ENCODE measurements at regions of chr19 and their contacts with region 1.

Region 1: DNA sequence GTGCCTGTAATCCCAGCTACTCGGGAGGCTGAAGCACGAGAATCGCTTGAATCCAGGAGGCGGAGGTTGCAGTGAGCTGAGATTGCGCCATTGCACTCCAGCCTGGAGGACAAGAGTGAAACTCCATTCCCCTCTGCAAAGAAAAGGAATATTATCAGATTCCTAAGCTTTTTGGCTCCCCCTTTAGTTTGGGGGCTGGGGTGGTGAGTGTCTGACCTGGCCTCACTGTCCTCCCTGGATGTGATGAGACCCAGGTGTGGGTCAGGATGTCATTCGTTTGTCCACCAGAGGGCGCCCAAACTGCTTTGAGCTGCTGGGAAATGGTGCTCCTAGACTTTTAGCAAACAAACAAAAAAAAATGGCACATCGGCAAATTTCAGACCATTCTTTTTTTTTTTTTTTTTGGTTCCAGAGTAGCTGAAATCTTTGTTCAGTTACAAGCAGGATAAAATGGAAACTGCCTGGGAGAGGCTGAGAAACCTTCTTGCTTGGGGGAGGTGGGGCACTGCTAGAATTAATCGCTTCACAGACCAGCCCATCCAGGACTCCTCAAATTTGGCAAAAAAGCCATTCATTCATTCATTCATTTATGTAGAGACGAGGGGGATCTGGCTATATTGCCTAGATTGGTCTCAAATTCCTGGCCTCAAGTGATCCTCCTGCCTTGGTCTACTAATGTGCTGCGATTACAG is 29.4 kb downstream of the SPC24 start:
- DNase-seq: peak; percentile 33 to 73 (median 62)
- ATAC-seq: peak; percentile 77
- H3K4me3 ChIP-seq: no peak overlapping the region
- H3K4me3 Mint-ChIP-seq: no peak overlapping the region
- H3K27ac ChIP-seq: no peak overlapping the region
- H3K27ac Mint-ChIP-seq: peak overlapping the region in 3 of 9 donors; percentile 23 to 72 (median 48)
- H3K4me1 ChIP-seq: no peaks in the 10 kb centered on the region
- H3K4me1 Mint-ChIP-seq: peaks cover 0 to 9% (median 5%) of the 10 kb centered on the region in 7 donors
- H3K27me3 ChIP-seq: no peaks in the 10 kb centered on the region
- H3K27me3 Mint-ChIP-seq: no peaks in the 10 kb centered on the region

Region 2: GRCh38 chr19:10936661-10937084 is 189.5 kb before region 1 on chr19:
- CTCF ChIA-PET with region 1: interaction called, 4 read pairs
- POLR2A ChIA-PET with region 1: no interaction called
- intact Hi-C with region 1: loop called in 1 of 2 experiments (anchors 1 kb)
- DNase-seq: peak in 7 of 9 donors; percentile 40 to 69 (median 62)
- ATAC-seq: peak; percentile 89
- H3K4me3 ChIP-seq: no peak overlapping the region
- H3K4me3 Mint-ChIP-seq: peak overlapping the region in 4 of 10 donors; percentile 5 to 48 (median 38)
- H3K27ac ChIP-seq: no peak overlapping the region
- H3K27ac Mint-ChIP-seq: peak overlapping the region in 2 of 9 donors; percentile 34 to 55
- H3K4me1 ChIP-seq: no peaks in the 10 kb centered on the region
- H3K4me1 Mint-ChIP-seq: peaks cover 0 to 13% (median 8%) of the 10 kb centered on the region in 7 donors
- H3K27me3 ChIP-seq: no peaks in the 10 kb centered on the region
- H3K27me3 Mint-ChIP-seq: no peaks in the 10 kb centered on the region

Region 3: DNA sequence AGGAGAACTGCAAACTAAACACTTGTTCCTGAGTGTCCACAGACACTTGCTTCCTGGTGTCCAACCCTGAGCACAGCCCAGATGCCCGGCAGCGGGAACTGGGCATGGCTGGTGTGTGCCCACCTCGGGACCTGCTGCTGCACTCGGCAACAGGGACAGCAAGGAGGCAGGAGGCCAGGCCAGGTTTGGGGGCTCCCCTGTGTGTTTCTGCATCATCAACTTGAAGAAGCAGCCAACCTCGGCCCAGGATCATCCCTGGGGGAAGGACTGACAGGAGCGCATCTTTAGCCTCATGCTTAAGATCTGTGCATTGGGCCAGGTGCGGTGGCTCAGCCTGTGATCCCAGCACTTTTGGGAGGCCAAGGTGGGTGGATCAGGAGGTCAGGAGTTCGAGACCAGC is 71.9 kb before region 1 on chr19:
- CTCF ChIA-PET with region 1: no interaction called
- POLR2A ChIA-PET with region 1: no interaction called
- intact Hi-C with region 1: no loop called
- DNase-seq: no peak
- ATAC-seq: no peak
- H3K4me3 ChIP-seq: no peak overlapping the region
- H3K4me3 Mint-ChIP-seq: no peak overlapping the region
- H3K27ac ChIP-seq: no peak overlapping the region
- H3K27ac Mint-ChIP-seq: peak overlapping the region in 2 of 9 donors; percentile 27 to 65
- H3K4me1 ChIP-seq: peaks cover 25 to 37% of the 10 kb centered on the region in 2 donors
- H3K4me1 Mint-ChIP-seq: peaks cover 8 to 40% (median 32%) of the 10 kb centered on the region in 7 donors
- H3K27me3 ChIP-seq: no peaks in the 10 kb centered on the region
- H3K27me3 Mint-ChIP-seq: no peaks in the 10 kb centered on the region

Region 4: GRCh38 chr19:11090054-11090900 is 35.9 kb before region 1 on chr19:
- CTCF ChIA-PET with region 1: interaction called, 3 read pairs
- POLR2A ChIA-PET with region 1: interaction called, 5 read pairs
- intact Hi-C with region 1: loop called in 1 of 2 experiments (anchors 1 kb)
- DNase-seq: peak; percentile 89 to 97 (median 96)
- ATAC-seq: peak; percentile 90
- H3K4me3 ChIP-seq: peak overlapping the region; percentile 83
- H3K4me3 Mint-ChIP-seq: peak overlapping the region; percentile 85 to 94 (median 89)
- H3K27ac ChIP-seq: peak overlapping the region; percentile 91
- H3K27ac Mint-ChIP-seq: peak overlapping the region; percentile 88 to 99 (median 96)
- H3K4me1 ChIP-seq: peaks cover 24 to 41% of the 10 kb centered on the region in 2 donors
- H3K4me1 Mint-ChIP-seq: peaks cover 13 to 51% (median 44%) of the 10 kb centered on the region in 7 donors
- H3K27me3 ChIP-seq: no peaks in the 10 kb centered on the region
- H3K27me3 Mint-ChIP-seq: peaks cover 0 to 2% (median 0%) of the 10 kb centered on the region in 5 donors

Measured in naive thymus-derived CD4-positive, alpha-beta T cell (primary cell).